Common myeloid progenitor, CD34-positive (primary cell): ENCODE measurements at regions of chr1 and their contacts with region 1.

Region 1: GRCh38 chr1:65020774-65021173 is 54.4 kb upstream of the JAK1 start:
- DNase-seq: no peak
- H3K4me3 ChIP-seq: no peak overlapping the region
- H3K27ac ChIP-seq: peak overlapping the region in 1 of 2 experiments; percentile 15
- H3K4me1 ChIP-seq: no peaks in the 10 kb centered on the region
- H3K27me3 ChIP-seq: no peaks in the 10 kb centered on the region

Region 2: DNA sequence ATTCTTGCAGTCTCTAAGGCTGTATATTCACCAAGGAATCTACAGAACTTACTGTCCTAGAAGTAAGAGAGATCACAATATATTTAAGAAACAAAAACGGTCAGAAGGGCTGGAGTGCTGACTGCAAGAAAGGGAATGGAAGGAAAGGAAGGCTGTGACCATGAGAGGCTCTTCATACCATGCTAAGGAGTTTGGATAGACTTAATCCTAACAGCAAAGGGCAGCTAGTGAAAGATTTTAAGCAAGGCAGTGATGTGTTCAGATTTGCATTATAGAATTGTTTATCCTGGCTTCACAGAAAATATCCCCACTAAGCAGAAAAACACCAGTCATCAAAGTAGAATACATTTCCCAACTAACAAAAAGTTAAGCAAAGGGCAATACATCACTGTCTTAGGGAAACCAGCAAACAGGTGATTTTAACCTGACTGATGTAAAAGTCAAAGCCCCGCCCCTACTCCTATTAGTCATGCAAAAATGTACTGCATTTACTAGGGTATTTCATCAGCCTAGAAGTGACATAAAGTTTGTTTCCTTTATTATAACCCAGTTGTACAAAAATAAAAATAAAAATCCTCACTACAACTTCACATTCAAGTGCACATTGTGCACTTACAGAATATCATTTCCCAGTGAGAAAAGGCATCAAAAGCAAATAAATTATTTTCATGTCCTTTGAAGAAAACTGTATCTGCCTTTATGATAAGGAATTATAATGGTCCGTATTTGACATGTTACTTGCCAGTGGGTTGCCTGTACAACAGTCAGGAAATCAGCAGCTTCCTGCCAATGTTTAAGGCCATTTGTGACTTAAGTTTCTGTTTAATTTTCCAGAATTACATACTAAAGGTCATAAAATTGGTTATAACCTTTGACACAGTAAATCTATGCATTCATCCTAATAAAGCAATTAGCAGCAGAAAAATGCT is 71.6 kb before region 1 on chr1:
- CTCF ChIA-PET with region 1: no interaction called
- POLR2A ChIA-PET with region 1: no interaction called
- DNase-seq: peak; percentile 50 to 90 (median 84)
- H3K4me3 ChIP-seq: peak overlapping the region in 5 of 7 experiments; percentile 5 to 56 (median 17)
- H3K27ac ChIP-seq: peak overlapping the region; percentile 70 to 89
- H3K4me1 ChIP-seq: peaks cover 24 to 63% (median 45%) of the 10 kb centered on the region in 4 experiments
- H3K27me3 ChIP-seq: no peaks in the 10 kb centered on the region

Region 3: GRCh38 chr1:65009724-65010420 is 10.9 kb before region 1 on chr1:
- CTCF ChIA-PET with region 1: interaction called, 15 read pairs
- POLR2A ChIA-PET with region 1: no interaction called
- DNase-seq: peak in 2 of 3 donors; percentile 52 to 66
- H3K4me3 ChIP-seq: no peak overlapping the region
- H3K27ac ChIP-seq: no peak overlapping the region
- H3K4me1 ChIP-seq: peaks cover 5 to 29% (median 19%) of the 10 kb centered on the region in 4 experiments
- H3K27me3 ChIP-seq: no peaks in the 10 kb centered on the region